Panc1 (cell line): ENCODE measurements at regions of chr6 and their contacts with region 1.

Region 1: DNA sequence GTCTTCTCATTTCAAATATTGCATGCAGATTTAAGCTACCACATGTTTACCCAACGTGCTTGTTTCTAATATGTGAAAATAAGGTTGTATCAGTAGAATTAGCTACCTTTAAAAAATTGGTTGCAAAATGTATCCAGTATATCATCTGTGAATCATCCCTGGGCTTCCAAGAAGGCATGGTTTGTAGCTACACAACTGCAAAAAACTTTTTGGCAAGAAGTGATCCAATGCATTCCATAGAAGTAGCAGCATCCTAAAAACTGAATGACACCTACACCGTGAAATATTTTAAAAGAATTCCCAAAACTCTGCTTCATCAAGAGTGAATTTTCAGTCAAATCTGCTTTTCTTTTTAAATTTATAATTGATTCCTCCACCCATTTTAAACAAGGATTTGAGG is 89.1 kb downstream of the AIG1 start:
- DNase-seq: no peak
- ATAC-seq: no peak
- H3K4me3 ChIP-seq: no peak overlapping the region
- H3K27ac ChIP-seq: no peak overlapping the region
- H3K4me1 ChIP-seq: no peaks in the 10 kb centered on the region
- H3K27me3 ChIP-seq: no peaks in the 10 kb centered on the region
- CTCF ChIP-seq: no peak

Region 2: GRCh38 chr6:142474531-142475289 is 675.1 kb before region 1 on chr6:
- CTCF ChIA-PET with region 1: interaction called, 10 read pairs
- POLR2A ChIA-PET with region 1: no interaction called
- in situ Hi-C with region 1: no loop called
- intact Hi-C with region 1: no loop called
- DNase-seq: peak; percentile 54
- ATAC-seq: peak; percentile 97
- H3K4me3 ChIP-seq: no peak overlapping the region
- H3K27ac ChIP-seq: no peak overlapping the region
- H3K4me1 ChIP-seq: peaks cover 3% of the 10 kb centered on the region; the same call in 1 of the 2 replicates
- H3K27me3 ChIP-seq: no peaks in the 10 kb centered on the region
- CTCF ChIP-seq: peak; percentile 82